Activated T-helper 2 cell treated with anti-CD3 and anti-CD28 coated beads, Interferon-gamma antibody, Interleukin-2, Interleukin-4, amounts not matched to agents 10 μg/mL and 5 μg/mL and 100 μg/mL, durations not matched to agents 14 hours and 24 hours and 36 hours (primary cell): ENCODE measurements at regions of chr13 and their contacts with region 1.

Region 1: GRCh38 chr13:95150555-95150954 is 150.7 kb downstream of the ABCC4 start:
- DNase-seq: no peak
- H3K4me3 Mint-ChIP-seq: no peak overlapping the region
- H3K27ac Mint-ChIP-seq: peak overlapping the region; percentile 3
- H3K4me1 Mint-ChIP-seq: peaks cover 23% of the 10 kb centered on the region
- H3K27me3 Mint-ChIP-seq: no peaks in the 10 kb centered on the region

Region 2: DNA sequence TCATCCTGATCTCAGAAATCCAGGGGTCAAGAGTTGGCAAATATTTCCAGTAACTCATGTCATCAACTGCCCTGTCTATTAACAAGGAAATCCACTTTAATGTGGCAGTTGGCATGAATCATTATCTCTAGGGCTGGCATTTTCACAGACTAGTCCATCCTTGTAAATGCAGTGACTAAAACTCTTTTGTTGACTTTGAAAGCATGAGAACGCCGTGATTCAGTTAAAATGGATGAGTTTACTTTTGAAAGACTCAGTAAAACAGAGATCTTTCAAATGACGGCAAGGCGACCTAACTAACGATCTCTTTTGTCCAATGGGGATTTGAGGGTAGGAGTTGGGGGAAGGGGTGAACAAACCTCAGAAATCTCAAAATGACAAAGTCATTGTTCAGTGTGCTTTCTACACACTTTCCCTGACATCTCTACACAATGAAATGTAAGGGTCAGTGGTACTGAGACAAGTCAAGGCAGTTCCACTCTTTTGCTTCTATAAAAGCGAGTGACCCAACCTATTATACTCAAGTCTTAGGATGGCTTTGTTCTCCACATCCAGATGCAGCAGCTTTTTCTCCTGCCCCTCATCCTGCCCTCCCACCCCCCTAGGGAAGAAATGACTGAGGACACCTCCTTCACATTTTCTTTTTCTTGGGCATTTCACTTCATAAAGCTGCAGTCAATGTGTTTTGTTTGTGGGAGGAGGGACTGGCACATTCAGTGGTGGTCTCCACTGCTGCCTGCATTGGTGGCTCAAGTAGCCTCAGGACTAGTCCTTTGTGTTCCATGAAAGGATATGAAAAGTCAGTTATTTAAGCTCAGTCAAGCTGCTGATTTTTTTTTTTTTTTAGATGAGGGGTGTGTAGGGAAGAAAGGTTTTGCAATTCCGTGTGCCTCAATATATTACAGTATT is 49.8 kb before region 1 on chr13:
- intact Hi-C with region 1: loop called (anchors 2 kb)
- DNase-seq: no peak
- H3K4me3 Mint-ChIP-seq: no peak overlapping the region
- H3K27ac Mint-ChIP-seq: peak overlapping the region; percentile 72
- H3K4me1 Mint-ChIP-seq: peaks cover 18% of the 10 kb centered on the region
- H3K27me3 Mint-ChIP-seq: no peaks in the 10 kb centered on the region

Region 3: DNA sequence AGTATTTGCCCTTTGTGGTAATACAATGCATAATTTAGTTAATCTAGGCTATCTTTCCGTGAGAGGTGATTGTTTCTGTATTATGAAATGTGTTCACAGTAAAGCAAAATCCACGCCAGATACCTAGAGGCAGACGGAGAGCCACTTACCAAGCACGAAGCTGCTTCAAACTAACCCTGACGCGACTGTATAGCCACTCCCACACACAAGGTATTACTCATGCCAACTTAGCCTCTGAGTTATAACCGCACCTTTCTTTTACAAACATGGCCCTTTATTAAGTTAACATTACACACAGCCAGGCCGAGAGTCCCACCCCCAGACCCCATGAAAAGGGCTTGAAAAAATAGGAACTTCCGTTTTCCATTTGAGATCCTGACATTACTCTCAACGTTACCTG is 35.0 kb before region 1 on chr13:
- intact Hi-C with region 1: no loop called
- DNase-seq: no peak
- H3K4me3 Mint-ChIP-seq: no peak overlapping the region
- H3K27ac Mint-ChIP-seq: no peak overlapping the region
- H3K4me1 Mint-ChIP-seq: peaks cover 3% of the 10 kb centered on the region
- H3K27me3 Mint-ChIP-seq: no peaks in the 10 kb centered on the region